Sigmoid colon (tissue), 7 donors: ENCODE measurements at regions of chr7 and their contacts with region 1.

Region 1: DNA sequence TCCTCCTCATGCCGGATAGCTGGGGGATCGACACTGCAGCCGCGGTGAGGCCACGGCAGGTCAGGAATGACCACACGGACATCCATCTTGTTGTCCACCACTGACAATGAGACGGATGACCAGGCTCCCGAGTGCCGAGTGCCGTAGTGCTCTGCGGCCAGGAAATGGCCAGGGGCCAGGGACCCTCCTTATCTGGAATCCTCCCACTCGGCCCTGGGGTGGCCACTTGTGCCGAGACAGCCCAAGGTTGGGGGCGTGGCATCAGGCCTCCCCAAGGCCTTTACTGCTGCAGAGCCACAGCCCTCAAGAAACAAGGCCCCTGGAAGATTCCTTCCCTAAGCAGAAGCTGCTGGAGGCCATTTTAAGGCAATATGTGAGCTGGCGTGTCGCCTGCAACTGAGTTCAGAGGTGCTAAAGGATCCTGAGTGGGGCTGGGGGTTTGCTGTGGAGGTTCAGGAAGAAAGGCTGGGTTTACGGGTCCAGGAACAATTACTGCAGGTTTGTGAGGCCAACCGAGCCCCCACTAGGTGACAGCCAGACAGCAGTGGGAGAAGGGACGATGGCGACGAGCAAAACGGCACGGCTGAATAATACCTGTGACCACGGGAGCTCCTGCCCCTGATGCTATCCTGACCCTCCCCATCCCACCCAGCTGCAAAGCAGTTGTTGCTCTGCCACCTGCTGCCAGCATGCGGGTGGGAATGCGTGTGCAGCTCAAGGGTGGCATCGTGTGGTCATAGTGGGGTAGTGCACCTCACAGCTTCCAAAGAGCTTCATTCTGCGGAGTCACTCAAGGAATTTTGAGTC is 31.6 kb upstream of the LEP start:
- DNase-seq: peak; percentile 80
- H3K4me3 ChIP-seq: no peak overlapping the region
- H3K27ac ChIP-seq: no peak overlapping the region
- H3K4me1 ChIP-seq: no peaks in the 10 kb centered on the region
- H3K27me3 ChIP-seq: peaks cover 0 to 26% (median 5%) of the 10 kb centered on the region in 3 donors
- CTCF ChIP-seq: peak; percentile 93 to 99 (median 98)
- EP300 ChIP-seq: no peak
- POLR2A ChIP-seq: no peak

Region 2: DNA sequence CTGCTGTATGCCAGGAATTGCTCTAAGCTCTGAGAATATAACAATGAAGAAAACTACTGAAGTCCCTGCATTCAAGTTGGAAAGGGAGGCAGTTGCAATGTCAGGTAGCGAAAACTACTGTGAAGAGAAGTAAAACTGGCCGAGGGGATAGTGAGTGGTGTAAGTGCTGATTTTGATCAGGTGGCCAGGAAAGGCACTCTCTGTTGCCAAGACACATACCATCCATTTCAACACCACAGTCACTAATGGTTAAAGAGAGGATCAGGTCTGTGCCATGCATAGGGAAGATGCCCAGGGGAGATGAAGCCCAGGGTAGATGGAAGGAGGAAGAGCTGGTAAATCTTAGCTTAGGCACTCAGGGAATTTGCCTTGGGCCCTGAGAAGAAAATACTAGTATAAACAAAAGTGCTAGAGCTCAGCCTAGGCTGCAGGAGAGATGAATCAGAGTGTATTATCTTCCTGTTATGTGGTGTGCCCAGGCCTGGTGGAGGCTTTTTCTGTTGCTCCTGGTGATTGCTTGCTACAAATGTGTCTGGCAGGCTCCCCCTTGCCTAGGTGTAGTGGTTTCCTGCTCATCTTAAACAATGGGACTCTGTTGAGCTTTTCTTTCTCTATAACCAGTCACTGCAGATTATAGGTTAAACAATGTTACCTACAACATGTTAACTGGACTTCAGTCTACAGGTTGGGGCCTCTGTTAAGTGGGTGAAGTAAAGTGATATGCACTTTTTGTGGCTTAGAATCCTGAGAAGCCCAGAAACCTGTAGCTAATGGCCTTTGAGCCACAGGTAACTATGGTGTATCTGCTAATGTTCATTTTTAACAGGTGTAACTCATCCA is 303.7 kb before region 1 on chr7:
- intact Hi-C with region 1: no loop called
- DNase-seq: no peak
- H3K4me3 ChIP-seq: no peak overlapping the region
- H3K27ac ChIP-seq: peak overlapping the region in 1 of 4 donors; percentile 3
- H3K4me1 ChIP-seq: peaks cover 0 to 31% (median 25%) of the 10 kb centered on the region in 4 donors
- H3K27me3 ChIP-seq: no peaks in the 10 kb centered on the region
- CTCF ChIP-seq: no peak
- EP300 ChIP-seq: no peak
- POLR2A ChIP-seq: no peak

Region 3: DNA sequence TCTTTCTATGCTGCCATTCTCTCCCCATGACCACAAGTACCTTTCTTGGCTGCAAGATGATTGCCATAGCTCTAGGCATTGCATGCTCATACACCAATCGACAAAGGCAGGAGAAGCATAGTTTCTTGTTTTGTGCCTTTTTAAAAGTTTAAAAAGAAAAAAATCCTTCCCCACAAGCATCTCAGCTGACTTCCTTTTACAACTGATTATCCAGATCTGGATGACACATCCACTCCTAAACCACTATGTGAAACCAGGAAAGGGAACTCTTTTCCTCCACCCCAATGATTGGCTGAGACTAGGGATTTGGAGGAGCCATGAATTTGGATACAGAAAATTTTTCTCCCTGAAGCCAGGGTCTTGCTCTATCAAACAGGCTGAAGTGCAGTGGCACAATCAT is 163.7 kb before region 1 on chr7:
- intact Hi-C with region 1: loop called (anchors 5 kb)
- DNase-seq: no peak
- H3K4me3 ChIP-seq: no peak overlapping the region
- H3K27ac ChIP-seq: no peak overlapping the region
- H3K4me1 ChIP-seq: peaks cover 0 to 16% (median 11%) of the 10 kb centered on the region in 4 donors
- H3K27me3 ChIP-seq: no peaks in the 10 kb centered on the region
- CTCF ChIP-seq: no peak
- EP300 ChIP-seq: no peak
- POLR2A ChIP-seq: no peak

Region 4: DNA sequence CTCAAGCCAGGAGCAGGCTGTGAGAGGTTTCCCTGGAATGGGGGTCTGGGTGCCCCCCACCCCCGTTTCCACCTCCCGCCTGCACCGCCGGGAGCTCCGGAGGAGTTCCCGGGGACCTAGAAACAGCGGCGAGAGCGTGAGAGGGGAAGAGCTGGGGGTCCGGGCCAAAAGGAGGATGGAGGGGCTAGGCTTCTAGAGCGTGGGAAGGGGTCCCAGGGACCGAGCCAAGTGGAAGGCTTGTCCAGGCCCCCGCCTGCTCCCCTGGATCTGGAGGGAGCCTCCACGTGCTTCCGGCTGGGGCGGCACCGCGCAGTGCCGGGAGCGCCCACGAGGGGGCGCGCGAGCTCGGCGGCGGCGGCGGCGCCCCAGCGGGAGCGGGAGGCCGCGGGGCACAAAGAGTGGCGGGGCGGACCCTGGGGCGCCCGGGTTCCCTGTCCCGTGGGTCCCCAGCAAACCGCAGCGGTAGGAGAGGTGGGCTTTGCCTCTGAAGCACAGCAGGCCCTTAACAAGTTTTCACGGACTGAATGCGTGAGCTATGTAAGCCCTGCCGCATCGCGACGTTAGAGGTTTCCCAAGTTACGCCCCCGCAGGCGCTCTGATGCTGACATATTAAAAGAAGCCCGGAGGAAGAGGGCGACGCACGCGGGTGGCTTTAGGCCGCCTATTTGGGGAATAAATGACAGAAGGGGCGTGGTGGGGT is 73.8 kb before region 1 on chr7:
- intact Hi-C with region 1: loop called (anchors 1 kb)
- DNase-seq: no peak
- H3K4me3 ChIP-seq: peak overlapping the region; percentile 38 to 58 (median 51)
- H3K27ac ChIP-seq: no peak overlapping the region
- H3K4me1 ChIP-seq: peaks cover 0 to 24% (median 21%) of the 10 kb centered on the region in 4 donors
- H3K27me3 ChIP-seq: peaks cover 3 to 72% (median 36%) of the 10 kb centered on the region in 3 donors
- CTCF ChIP-seq: peak in 3 of 4 experiments; percentile 26 to 98 (median 29)
- EP300 ChIP-seq: no peak
- POLR2A ChIP-seq: no peak